ENCODE measurements at regions of chr7 and their contacts with region 1.

Region 1: GRCh38 chr7:91880413-91881241 is at the start of gene MTERF1:
- DNase-seq: peak; percentile 85 to 93 (median 91)
- ATAC-seq: peak; percentile 100
- H3K4me3 ChIP-seq: peak within 1 kb of the TSS; percentile 84
- H3K4me3 Mint-ChIP-seq: peak within 1 kb of the TSS; percentile 88 to 100 (median 98)
- H3K27ac ChIP-seq: peak within 1 kb of the TSS; percentile 72
- H3K27ac Mint-ChIP-seq: peak within 1 kb of the TSS; percentile 89 to 98 (median 96)
- H3K4me1 ChIP-seq: peaks cover 0 to 8% of the 10 kb centered on the region in 2 donors
- H3K4me1 Mint-ChIP-seq: peaks cover 31 to 53% (median 39%) of the 10 kb centered on the region in 7 donors
- H3K27me3 ChIP-seq: no peaks in the 10 kb centered on the region
- H3K27me3 Mint-ChIP-seq: peaks cover 0 to 9% (median 0%) of the 10 kb centered on the region in 5 donors
- total RNA-seq, gene MTERF1: 9.6 to 32.7 (median 17.8) TPM

Region 2: DNA sequence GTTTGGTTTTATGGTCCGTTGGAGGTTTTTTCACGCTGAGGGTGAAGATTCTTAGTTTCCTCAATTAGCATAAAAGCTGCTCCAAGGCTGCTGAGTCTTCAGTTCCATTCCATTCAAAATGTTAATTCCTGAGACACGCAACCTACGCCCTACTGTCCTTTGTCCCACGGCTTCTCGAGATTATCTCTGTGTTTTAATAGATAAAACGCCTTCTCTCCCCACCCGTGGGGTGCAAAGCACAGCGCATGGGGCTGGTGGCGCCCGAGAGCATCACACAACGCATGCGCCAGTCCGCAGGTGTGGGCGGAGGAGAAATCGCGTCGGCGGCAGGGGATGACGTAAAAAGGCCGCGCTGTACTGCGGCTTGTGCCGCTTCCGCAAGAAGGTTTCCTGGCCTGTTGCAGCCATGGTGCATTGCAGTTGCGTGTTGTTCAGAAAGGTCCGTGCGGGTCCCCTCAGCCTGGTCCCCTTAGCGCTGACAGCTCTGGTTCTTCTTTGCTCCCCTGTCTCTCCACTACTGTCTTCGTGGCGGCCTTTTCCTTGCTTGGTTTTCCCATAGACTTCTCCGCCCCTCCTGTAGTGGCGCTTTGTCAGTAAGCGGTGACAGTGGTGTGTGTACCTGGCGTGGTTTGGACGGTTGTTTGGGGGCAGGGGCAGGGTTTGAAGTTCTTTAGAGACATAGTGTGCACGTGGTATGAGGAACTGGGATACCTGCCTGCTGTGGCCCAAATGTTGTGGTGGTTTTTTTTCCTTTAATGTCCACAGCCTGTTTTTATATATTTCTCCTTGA is 1534.1 kb before region 1 on chr7 and contains the start of gene GTPBP10:
- CTCF ChIA-PET with region 1: no interaction called
- POLR2A ChIA-PET with region 1: no interaction called
- intact Hi-C with region 1: loop called (anchors 1 to 2 kb)
- DNase-seq: peak; percentile 88 to 96 (median 94)
- ATAC-seq: peak; percentile 99
- H3K4me3 ChIP-seq: peak within 1 kb of the TSS; percentile 83
- H3K4me3 Mint-ChIP-seq: peak within 1 kb of the TSS; percentile 93 to 99 (median 98)
- H3K27ac ChIP-seq: peak within 1 kb of the TSS; percentile 95
- H3K27ac Mint-ChIP-seq: peak within 1 kb of the TSS; percentile 96 to 100 (median 99)
- H3K4me1 ChIP-seq: peaks cover 13 to 26% of the 10 kb centered on the region in 2 donors
- H3K4me1 Mint-ChIP-seq: peaks cover 23 to 65% (median 53%) of the 10 kb centered on the region in 7 donors
- H3K27me3 ChIP-seq: no peaks in the 10 kb centered on the region
- H3K27me3 Mint-ChIP-seq: peaks cover 0 to 2% (median 0%) of the 10 kb centered on the region in 5 donors
- total RNA-seq, gene GTPBP10: 21.5 to 51.4 (median 29.8) TPM

Region 3: GRCh38 chr7:91089382-91089963 is 791.2 kb before region 1 on chr7:
- CTCF ChIA-PET with region 1: interaction called, 3 read pairs
- POLR2A ChIA-PET with region 1: interaction called, 4 read pairs
- intact Hi-C with region 1: loop called in 1 of 2 experiments (anchors 2 kb)
- DNase-seq: peak in 6 of 9 donors; percentile 33 to 52 (median 38)
- ATAC-seq: peak; percentile 78
- H3K4me3 ChIP-seq: no peak overlapping the region
- H3K4me3 Mint-ChIP-seq: peak overlapping the region; percentile 2 to 71 (median 43)
- H3K27ac ChIP-seq: no peak overlapping the region
- H3K27ac Mint-ChIP-seq: peak overlapping the region in 4 of 9 donors; percentile 0 to 29 (median 12)
- H3K4me1 ChIP-seq: peaks cover 0 to 12% of the 10 kb centered on the region in 2 donors
- H3K4me1 Mint-ChIP-seq: peaks cover 14 to 36% (median 29%) of the 10 kb centered on the region in 7 donors
- H3K27me3 ChIP-seq: no peaks in the 10 kb centered on the region
- H3K27me3 Mint-ChIP-seq: peaks cover 0 to 9% (median 0%) of the 10 kb centered on the region in 5 donors

Region 4: DNA sequence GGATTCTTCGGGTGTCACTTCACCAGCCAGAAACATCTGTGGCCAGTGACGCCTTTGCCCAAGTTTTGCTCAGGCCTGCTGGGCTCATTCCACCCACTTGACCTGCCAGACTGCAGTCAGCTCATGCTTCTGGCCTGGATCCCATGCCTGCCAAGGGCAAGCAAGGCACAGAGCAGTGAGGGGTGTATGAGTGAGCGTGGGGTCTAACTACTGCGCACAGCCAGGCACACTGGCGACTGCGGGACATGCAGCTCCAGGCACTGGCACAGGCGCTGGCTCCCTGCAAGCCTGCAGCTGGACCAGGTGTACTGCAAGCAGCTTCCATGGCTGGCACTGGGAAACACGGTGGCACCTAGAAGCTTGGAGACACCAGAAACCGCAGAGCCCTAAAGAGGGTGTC is 80.2 kb before region 1 on chr7:
- CTCF ChIA-PET with region 1: no interaction called
- POLR2A ChIA-PET with region 1: no interaction called
- intact Hi-C with region 1: no loop called
- DNase-seq: no peak
- ATAC-seq: no peak
- H3K4me3 ChIP-seq: no peak overlapping the region
- H3K4me3 Mint-ChIP-seq: no peak overlapping the region
- H3K27ac ChIP-seq: no peak overlapping the region
- H3K27ac Mint-ChIP-seq: no peak overlapping the region
- H3K4me1 ChIP-seq: no peaks in the 10 kb centered on the region
- H3K4me1 Mint-ChIP-seq: no peaks in the 10 kb centered on the region
- H3K27me3 ChIP-seq: no peaks in the 10 kb centered on the region
- H3K27me3 Mint-ChIP-seq: no peaks in the 10 kb centered on the region

Region 5: DNA sequence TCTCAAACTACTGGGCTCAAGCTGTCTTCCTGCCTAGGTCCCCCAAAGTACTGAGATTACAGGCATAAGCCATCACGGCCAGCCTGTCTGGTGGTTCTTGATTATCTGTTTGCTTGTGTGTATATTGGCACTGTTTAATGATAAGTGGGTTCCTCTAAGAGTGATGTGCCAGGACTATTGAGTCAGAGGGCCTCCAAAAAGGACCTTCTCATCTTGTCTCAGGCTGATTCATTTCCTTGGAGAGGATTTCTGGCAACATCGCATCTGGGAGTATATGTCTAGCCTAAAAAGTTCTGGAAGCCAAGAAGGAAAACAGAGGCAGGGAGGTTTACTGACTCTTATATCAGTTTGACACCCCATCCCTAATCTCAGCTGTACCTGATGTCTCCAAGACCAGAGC is 33.0 kb after region 1 on chr7:
- CTCF ChIA-PET with region 1: no interaction called
- POLR2A ChIA-PET with region 1: no interaction called
- intact Hi-C with region 1: loop called in 1 of 2 experiments (anchors 2 kb)
- DNase-seq: no peak
- ATAC-seq: no peak
- H3K4me3 ChIP-seq: no peak overlapping the region
- H3K4me3 Mint-ChIP-seq: peak overlapping the region in 1 of 10 donors; percentile 43
- H3K27ac ChIP-seq: no peak overlapping the region
- H3K27ac Mint-ChIP-seq: no peak overlapping the region
- H3K4me1 ChIP-seq: peaks cover 3 to 5% of the 10 kb centered on the region in 2 donors
- H3K4me1 Mint-ChIP-seq: peaks cover 0 to 8% (median 3%) of the 10 kb centered on the region in 7 donors
- H3K27me3 ChIP-seq: no peaks in the 10 kb centered on the region
- H3K27me3 Mint-ChIP-seq: peaks cover 5 to 16% (median 13%) of the 10 kb centered on the region in 5 donors

Region 6: DNA sequence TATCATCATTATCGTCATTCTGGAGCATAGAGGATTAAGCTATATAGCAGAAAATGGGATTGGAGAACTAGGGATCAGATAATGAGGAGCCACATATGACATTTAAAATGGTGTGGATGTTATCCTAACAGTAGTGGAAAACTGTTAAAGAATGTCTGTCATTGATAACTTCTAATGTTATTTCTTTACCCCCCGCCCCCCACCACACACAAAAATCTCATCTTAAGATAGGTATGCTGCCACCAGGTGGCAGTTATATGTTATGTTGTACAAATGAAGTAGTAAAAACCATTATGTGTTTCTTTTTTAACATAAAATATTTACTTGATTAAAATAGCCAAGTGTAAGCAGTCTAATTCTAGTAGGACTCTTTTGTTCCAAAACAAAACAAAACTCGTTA is 73.0 kb after region 1 on chr7:
- CTCF ChIA-PET with region 1: no interaction called
- POLR2A ChIA-PET with region 1: no interaction called
- intact Hi-C with region 1: no loop called
- DNase-seq: no peak
- ATAC-seq: no peak
- H3K4me3 ChIP-seq: no peak overlapping the region
- H3K4me3 Mint-ChIP-seq: no peak overlapping the region
- H3K27ac ChIP-seq: no peak overlapping the region
- H3K27ac Mint-ChIP-seq: no peak overlapping the region
- H3K4me1 ChIP-seq: no peaks in the 10 kb centered on the region
- H3K4me1 Mint-ChIP-seq: peaks cover 20 to 71% (median 55%) of the 10 kb centered on the region in 7 donors
- H3K27me3 ChIP-seq: no peaks in the 10 kb centered on the region
- H3K27me3 Mint-ChIP-seq: no peaks in the 10 kb centered on the region

Region 7: GRCh38 chr7:92057362-92057761 is 176.7 kb after region 1 on chr7:
- CTCF ChIA-PET with region 1: no interaction called
- POLR2A ChIA-PET with region 1: no interaction called
- intact Hi-C with region 1: loop called in 1 of 2 experiments (anchors 5 kb)
- DNase-seq: no peak
- ATAC-seq: no peak
- H3K4me3 ChIP-seq: no peak overlapping the region
- H3K4me3 Mint-ChIP-seq: peak overlapping the region in 7 of 10 donors; percentile 16 to 78 (median 70)
- H3K27ac ChIP-seq: no peak overlapping the region
- H3K27ac Mint-ChIP-seq: peak overlapping the region in 3 of 9 donors; percentile 31 to 58 (median 34)
- H3K4me1 ChIP-seq: peaks cover 10 to 12% of the 10 kb centered on the region in 2 donors
- H3K4me1 Mint-ChIP-seq: peaks cover 7 to 32% (median 19%) of the 10 kb centered on the region in 7 donors
- H3K27me3 ChIP-seq: no peaks in the 10 kb centered on the region
- H3K27me3 Mint-ChIP-seq: no peaks in the 10 kb centered on the region

Region 8: GRCh38 chr7:92178927-92179924 is 298.6 kb after region 1 on chr7 and contains the start of gene LRRD1:
- CTCF ChIA-PET with region 1: no interaction called
- POLR2A ChIA-PET with region 1: no interaction called
- intact Hi-C with region 1: loop called in 1 of 2 experiments (anchors 1 kb)
- DNase-seq: peak; percentile 77 to 96 (median 89)
- ATAC-seq: peak; percentile 100
- H3K4me3 ChIP-seq: peak within 1 kb of the TSS; percentile 73
- H3K4me3 Mint-ChIP-seq: peak within 1 kb of the TSS; percentile 74 to 84 (median 80)
- H3K27ac ChIP-seq: peak within 1 kb of the TSS; percentile 37
- H3K27ac Mint-ChIP-seq: peak within 1 kb of the TSS in 5 of 9 donors; percentile 25 to 63 (median 41)
- H3K4me1 ChIP-seq: peaks cover 0 to 6% of the 10 kb centered on the region in 2 donors
- H3K4me1 Mint-ChIP-seq: peaks cover 0 to 17% (median 9%) of the 10 kb centered on the region in 7 donors
- H3K27me3 ChIP-seq: no peaks in the 10 kb centered on the region
- H3K27me3 Mint-ChIP-seq: peaks cover 0 to 33% (median 4%) of the 10 kb centered on the region in 5 donors
- total RNA-seq, gene LRRD1: 0.17 to 0.22 TPM in 2 of 5 experiments, not detected in the others

Region 9: GRCh38 chr7:92461027-92462003 is 580.7 kb after region 1 on chr7:
- CTCF ChIA-PET with region 1: no interaction called
- POLR2A ChIA-PET with region 1: no interaction called
- intact Hi-C with region 1: loop called in 1 of 2 experiments (anchors 5 kb)
- DNase-seq: peak in 6 of 9 donors; percentile 3 to 38 (median 24)
- ATAC-seq: peak; percentile 72
- H3K4me3 ChIP-seq: no peak overlapping the region
- H3K4me3 Mint-ChIP-seq: no peak overlapping the region
- H3K27ac ChIP-seq: no peak overlapping the region
- H3K27ac Mint-ChIP-seq: peak overlapping the region in 3 of 9 donors; percentile 16 to 46 (median 45)
- H3K4me1 ChIP-seq: no peaks in the 10 kb centered on the region
- H3K4me1 Mint-ChIP-seq: peaks cover 0 to 2% (median 0%) of the 10 kb centered on the region in 7 donors
- H3K27me3 ChIP-seq: no peaks in the 10 kb centered on the region
- H3K27me3 Mint-ChIP-seq: no peaks in the 10 kb centered on the region